ENCODE measurements at regions of chr2 and their contacts with region 1.

Region 1: DNA sequence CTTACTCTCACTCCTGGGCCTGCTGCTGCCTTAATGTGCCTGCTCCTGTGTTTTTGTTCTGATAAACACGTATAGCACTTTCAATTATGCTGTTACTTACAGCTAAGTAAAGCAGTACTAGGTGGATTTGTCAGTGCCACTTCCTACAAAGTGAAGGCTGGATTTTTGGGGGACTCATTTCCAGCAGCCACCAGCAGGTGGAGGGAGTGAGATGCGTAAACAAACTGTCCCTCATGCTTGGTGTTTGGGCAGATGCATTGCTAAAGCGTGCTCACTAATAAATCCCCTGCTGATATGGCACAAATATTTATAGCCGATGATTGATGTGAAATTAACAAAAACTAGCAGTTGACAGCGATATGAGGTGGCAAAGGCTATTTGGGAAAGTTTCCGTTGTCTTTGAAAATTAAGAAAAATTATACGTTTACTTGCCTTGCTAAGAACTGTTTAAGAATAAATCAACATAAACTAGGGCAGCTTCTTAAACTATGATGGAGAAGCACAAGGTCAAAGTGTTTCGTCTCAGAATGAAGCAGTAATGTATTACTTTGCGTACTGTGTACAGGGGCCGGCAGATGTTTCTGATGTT is 101.7 kb downstream of the AGAP1 start:
- DNase-seq: peak in 2 of 3 donors; percentile 79 to 86
- ATAC-seq: peak; percentile 75
- H3K4me3 ChIP-seq: no peak overlapping the region
- H3K4me1 ChIP-seq: no peaks in the 10 kb centered on the region
- CTCF ChIP-seq: peak; percentile 53

Region 2: GRCh38 chr2:235135990-235136561 is 459.4 kb before region 1 on chr2:
- intact Hi-C with region 1: loop called in 1 of 2 experiments (anchors 5 kb)
- DNase-seq: peak; percentile 68 to 95 (median 85)
- ATAC-seq: peak; percentile 96
- H3K4me3 ChIP-seq: no peak overlapping the region
- H3K4me1 ChIP-seq: peaks cover under 1% of the 10 kb centered on the region
- CTCF ChIP-seq: peak; percentile 56

Region 3: GRCh38 chr2:235669983-235670962 is 74.8 kb after region 1 on chr2:
- intact Hi-C with region 1: loop called (anchors 5 to 10 kb)
- DNase-seq: peak; percentile 67 to 76 (median 69)
- ATAC-seq: peak; percentile 79
- H3K4me3 ChIP-seq: peak overlapping the region; percentile 24
- H3K4me1 ChIP-seq: peaks cover 14% of the 10 kb centered on the region
- CTCF ChIP-seq: peak; percentile 57

Region 4: GRCh38 chr2:235746257-235747084 is 151.0 kb after region 1 on chr2:
- intact Hi-C with region 1: loop called (anchors 1 to 5 kb)
- DNase-seq: peak in 2 of 3 donors; percentile 58 to 63
- ATAC-seq: peak; percentile 92
- H3K4me3 ChIP-seq: no peak overlapping the region
- H3K4me1 ChIP-seq: peaks cover 7% of the 10 kb centered on the region
- CTCF ChIP-seq: peak; percentile 59